ENCODE measurements at regions of chr4 and their contacts with region 1.

Region 1: GRCh38 chr4:12633053-12633651 is 851.0 kb downstream of the RAB28 start:
- DNase-seq: peak; percentile 79
- ATAC-seq: peak; percentile 85

Region 2: DNA sequence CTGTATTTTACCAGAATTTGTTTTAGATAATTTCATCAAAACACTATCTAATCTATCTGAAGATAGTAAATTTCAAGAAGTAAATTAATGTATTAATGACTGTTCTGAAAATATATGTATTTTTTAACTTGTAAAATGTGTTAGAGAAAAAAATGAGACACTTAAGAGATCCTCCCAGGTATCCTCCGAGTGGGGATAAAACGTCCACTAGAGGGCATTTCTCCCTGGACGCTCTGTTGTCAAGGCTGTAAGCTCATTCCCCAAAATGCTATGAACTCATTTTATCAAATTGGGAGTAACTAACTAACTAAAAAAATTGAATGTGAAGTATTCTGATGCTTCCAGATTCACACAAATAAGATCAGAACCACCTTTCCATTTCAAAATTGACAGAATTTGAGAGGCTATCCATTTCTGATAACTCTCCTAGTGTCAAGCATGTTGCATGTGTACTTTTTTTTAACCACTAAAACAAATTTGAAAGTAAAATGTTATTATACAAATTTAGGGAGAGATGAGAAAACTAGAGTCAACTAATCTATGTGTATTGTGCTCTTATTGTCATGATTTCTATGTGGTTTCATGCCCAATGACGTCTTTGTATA is 867.2 kb before region 1 on chr4:
- intact Hi-C with region 1: loop called (anchors 2 kb)
- DNase-seq: no peak
- ATAC-seq: no peak

Region 3: GRCh38 chr4:11805842-11806241 is 827.3 kb before region 1 on chr4:
- intact Hi-C with region 1: loop called (anchors 10 kb)
- DNase-seq: no peak
- ATAC-seq: peak; percentile 70

Region 4: DNA sequence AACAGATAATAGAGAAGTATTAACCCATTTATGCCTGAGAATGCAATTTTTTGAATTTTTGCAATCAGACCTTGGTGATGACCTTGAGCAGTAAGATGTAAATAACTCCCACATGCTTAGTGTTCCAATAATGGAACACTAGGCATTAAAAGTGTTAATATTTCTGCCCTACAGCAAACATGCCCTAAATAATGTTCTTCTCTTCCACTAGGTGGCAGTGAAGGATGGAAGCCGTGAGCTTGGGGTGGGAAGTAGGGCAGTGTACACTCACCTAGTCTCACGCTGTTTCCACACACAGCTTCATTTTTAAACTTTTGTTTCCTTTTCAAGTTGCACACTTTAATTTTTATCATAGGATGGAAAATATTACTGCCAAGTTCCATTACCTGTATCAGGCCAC is 591.3 kb before region 1 on chr4:
- intact Hi-C with region 1: loop called (anchors 10 kb)
- DNase-seq: no peak
- ATAC-seq: no peak

Region 5: DNA sequence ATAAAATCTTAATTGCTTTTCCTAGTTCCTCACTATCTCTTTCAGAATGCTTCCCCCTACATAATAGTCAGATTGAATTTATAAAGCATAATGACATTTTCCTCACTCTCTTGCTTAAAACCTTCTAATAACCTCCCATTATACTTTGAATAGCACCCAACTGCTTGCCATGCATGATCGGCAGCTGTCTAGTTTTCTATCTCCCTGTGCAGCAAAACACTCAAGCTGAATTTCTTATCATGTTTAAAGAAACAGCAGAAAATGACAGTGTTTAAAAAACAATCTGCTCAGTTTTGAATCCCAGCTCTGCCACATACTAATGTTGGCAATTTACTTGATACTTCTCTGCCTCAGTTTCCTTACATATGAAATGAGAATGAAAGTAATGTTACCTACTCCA is 257.3 kb before region 1 on chr4:
- intact Hi-C with region 1: no loop called
- DNase-seq: no peak
- ATAC-seq: no peak

Measured in Right ventricle myocardium inferior (tissue), 1 donor.